A673 (cell line): ENCODE measurements at regions of chr2 and their contacts with region 1.

Region 1: GRCh38 chr2:121634354-121635307 is 14.6 kb downstream of the CLASP1 start:
- DNase-seq: peak; percentile 3
- H3K4me3 ChIP-seq: no peak overlapping the region
- H3K27ac ChIP-seq: peak overlapping the region; percentile 4
- H3K4me1 ChIP-seq: peaks cover 3% of the 10 kb centered on the region
- H3K27me3 ChIP-seq: no peaks in the 10 kb centered on the region
- CTCF ChIP-seq: no peak

Region 2: GRCh38 chr2:120945832-120946499 is 688.7 kb before region 1 on chr2:
- CTCF ChIA-PET with region 1: no interaction called
- POLR2A ChIA-PET with region 1: interaction called, 25 read pairs
- intact Hi-C with region 1: no loop called
- DNase-seq: no peak
- H3K4me3 ChIP-seq: no peak overlapping the region
- H3K27ac ChIP-seq: no peak overlapping the region
- H3K4me1 ChIP-seq: peaks cover 2% of the 10 kb centered on the region
- H3K27me3 ChIP-seq: no peaks in the 10 kb centered on the region
- CTCF ChIP-seq: no peak

Region 3: GRCh38 chr2:121670181-121670580 is 35.5 kb after region 1 on chr2:
- CTCF ChIA-PET with region 1: no interaction called
- POLR2A ChIA-PET with region 1: interaction called, 10 read pairs
- intact Hi-C with region 1: no loop called
- DNase-seq: no peak
- H3K4me3 ChIP-seq: no peak overlapping the region
- H3K27ac ChIP-seq: no peak overlapping the region
- H3K4me1 ChIP-seq: no peaks in the 10 kb centered on the region
- H3K27me3 ChIP-seq: no peaks in the 10 kb centered on the region
- CTCF ChIP-seq: no peak

Region 4: DNA sequence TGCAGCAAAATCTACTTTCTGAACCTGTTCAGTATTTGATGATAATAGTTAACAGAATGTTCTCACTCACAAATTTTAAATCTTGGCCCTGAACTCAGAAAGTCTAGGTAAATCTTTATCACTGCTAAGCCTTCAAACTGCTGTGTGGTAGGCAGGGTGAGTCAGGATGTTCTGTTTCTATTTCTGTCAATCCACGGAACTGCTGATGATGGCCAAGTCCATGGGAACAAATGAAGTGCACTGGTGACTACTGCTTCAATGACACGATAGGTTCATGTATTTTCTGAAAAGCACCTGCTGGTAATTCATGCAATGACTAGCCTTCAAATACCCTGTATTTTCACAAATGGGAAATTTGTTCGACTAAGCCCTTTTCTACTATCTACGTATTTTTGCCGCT is 87.8 kb after region 1 on chr2:
- CTCF ChIA-PET with region 1: no interaction called
- POLR2A ChIA-PET with region 1: no interaction called
- intact Hi-C with region 1: no loop called
- DNase-seq: no peak
- H3K4me3 ChIP-seq: no peak overlapping the region
- H3K27ac ChIP-seq: no peak overlapping the region
- H3K4me1 ChIP-seq: no peaks in the 10 kb centered on the region
- H3K27me3 ChIP-seq: no peaks in the 10 kb centered on the region
- CTCF ChIP-seq: no peak